Naive thymus-derived CD4-positive, alpha-beta T cell (primary cell): ENCODE measurements at regions of chr9 and their contacts with region 1.

Region 1: DNA sequence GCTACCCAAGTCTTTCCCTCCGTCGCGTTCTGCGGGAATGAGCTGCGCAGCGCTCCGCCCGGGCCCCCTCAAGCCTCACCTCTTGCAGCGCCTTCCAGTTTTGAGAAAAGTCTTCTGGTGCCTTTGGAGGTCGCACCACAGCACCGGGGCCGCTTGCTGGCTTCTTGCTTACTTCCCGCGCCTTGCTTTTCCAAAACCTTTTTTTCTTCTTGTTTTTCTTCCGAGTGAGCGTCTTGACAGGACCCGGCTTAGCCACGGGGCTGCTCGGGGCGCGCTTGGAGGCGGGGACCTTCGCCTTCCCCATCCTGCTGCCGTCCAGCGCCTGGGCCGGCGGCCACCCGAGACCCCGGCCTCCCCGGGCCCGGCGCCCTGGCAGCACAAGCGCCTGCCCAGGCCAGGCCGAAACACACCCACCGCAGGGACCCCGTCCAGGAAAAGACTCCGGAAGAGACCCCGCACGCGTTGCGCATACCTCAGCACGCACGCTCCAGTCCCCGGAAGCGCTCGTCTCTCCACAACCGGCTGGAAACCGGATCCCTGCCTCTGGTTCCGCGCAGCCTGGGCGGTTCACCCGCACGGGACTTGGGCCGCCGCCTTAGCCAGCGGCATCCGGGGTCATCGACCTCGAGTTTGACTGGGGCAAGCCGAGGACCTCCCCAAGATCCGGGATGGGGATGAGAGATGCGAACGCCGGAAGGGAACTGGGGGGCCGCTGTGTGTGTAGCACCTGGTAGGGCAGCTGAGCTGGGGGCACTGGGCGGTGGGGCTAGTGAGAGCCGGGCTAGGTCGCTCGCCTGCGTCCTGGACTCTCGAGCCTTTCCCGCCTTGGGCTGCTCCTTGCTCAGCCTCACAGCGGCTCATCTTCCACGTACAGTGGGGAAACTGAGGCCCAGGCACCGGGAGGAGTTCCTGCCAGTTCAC is at the start of gene REXO4:
- DNase-seq: peak; percentile 73 to 88 (median 84)
- ATAC-seq: peak; percentile 93
- H3K4me3 ChIP-seq: peak within 1 kb of the TSS; percentile 87
- H3K4me3 Mint-ChIP-seq: peak within 1 kb of the TSS; percentile 88 to 93 (median 91)
- H3K27ac ChIP-seq: peak within 1 kb of the TSS; percentile 80
- H3K27ac Mint-ChIP-seq: peak within 1 kb of the TSS; percentile 81 to 94 (median 91)
- H3K4me1 ChIP-seq: peaks cover 13 to 14% of the 10 kb centered on the region in 2 donors
- H3K4me1 Mint-ChIP-seq: peaks cover 32 to 60% (median 54%) of the 10 kb centered on the region in 7 donors
- H3K27me3 ChIP-seq: no peaks in the 10 kb centered on the region
- H3K27me3 Mint-ChIP-seq: peaks cover 0 to 3% (median 0%) of the 10 kb centered on the region in 5 donors
- total RNA-seq, gene REXO4: 17.8 to 44.1 (median 28.6) TPM

Region 2: DNA sequence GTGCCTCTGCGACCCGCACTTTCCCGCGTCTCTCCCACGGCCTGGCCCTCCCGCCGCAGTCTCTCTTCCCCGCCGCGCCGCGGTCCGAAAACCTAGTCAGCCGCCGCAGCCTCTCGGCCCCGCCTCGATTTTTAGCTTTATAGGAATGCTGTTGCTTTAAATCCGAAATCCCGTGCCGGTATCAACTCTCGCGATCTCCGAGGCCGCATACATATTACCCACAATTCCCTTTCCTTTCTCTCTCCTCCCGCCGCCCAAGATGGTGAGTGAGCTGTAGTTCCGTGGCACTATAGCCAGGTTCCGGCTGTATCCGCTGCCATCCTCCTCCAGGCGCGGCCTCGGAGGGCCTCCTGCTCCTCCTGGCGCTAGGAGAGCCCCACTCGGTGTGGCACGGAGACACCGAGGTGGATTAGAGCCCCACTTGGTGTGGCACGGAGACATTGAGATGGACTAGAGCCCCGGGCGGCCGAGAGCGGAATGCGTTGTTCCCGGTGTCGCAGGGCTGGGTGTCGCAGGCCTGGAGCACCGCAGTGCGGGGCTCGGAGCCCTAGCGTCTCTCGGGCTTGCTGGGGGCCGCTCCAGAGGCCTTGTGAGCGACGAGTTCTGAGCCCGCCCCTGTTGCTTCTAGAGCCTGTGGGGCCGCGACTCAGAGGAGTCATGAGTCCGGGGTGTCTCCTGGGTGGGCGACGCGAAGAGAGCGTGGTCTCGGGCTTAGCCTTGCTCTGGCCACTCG is 69.7 kb before region 1 on chr9 and contains the starts of genes MED22 and RPL7A:
- CTCF ChIA-PET with region 1: no interaction called
- POLR2A ChIA-PET with region 1: no interaction called
- intact Hi-C with region 1: loop called (anchors 1 to 5 kb)
- DNase-seq: peak; percentile 72 to 95 (median 92)
- ATAC-seq: peak; percentile 95
- H3K4me3 ChIP-seq: peak within 1 kb of the TSS; percentile 93
- H3K4me3 Mint-ChIP-seq: peak within 1 kb of the TSS; percentile 94 to 100 (median 98)
- H3K27ac ChIP-seq: peak within 1 kb of the TSS; percentile 98
- H3K27ac Mint-ChIP-seq: peak within 1 kb of the TSS; percentile 87 to 99 (median 97)
- H3K4me1 ChIP-seq: peaks cover 19 to 20% of the 10 kb centered on the region in 2 donors
- H3K4me1 Mint-ChIP-seq: peaks cover 23 to 46% (median 39%) of the 10 kb centered on the region in 7 donors
- H3K27me3 ChIP-seq: no peaks in the 10 kb centered on the region
- H3K27me3 Mint-ChIP-seq: peaks cover 0 to 2% (median 0%) of the 10 kb centered on the region in 5 donors
- total RNA-seq, gene MED22: 26.5 to 44.6 (median 32.8) TPM
- total RNA-seq, gene RPL7A: 2,002 to 2,815 (median 2,428) TPM

Region 3: GRCh38 chr9:133478851-133479711 is 61.3 kb after region 1 on chr9 and contains the start of gene SLC2A6:
- CTCF ChIA-PET with region 1: no interaction called
- POLR2A ChIA-PET with region 1: no interaction called
- intact Hi-C with region 1: loop called in 1 of 2 experiments (anchors 2 kb)
- DNase-seq: peak; percentile 64 to 87 (median 74)
- ATAC-seq: peak; percentile 96
- H3K4me3 ChIP-seq: peak within 1 kb of the TSS; percentile 77
- H3K4me3 Mint-ChIP-seq: peak within 1 kb of the TSS; percentile 50 to 83 (median 78)
- H3K27ac ChIP-seq: peak within 1 kb of the TSS; percentile 50
- H3K27ac Mint-ChIP-seq: peak within 1 kb of the TSS in 5 of 9 donors; percentile 48 to 83 (median 60)
- H3K4me1 ChIP-seq: peaks cover 0 to 12% of the 10 kb centered on the region in 2 donors
- H3K4me1 Mint-ChIP-seq: peaks cover 0 to 15% (median 10%) of the 10 kb centered on the region in 7 donors
- H3K27me3 ChIP-seq: no peaks in the 10 kb centered on the region
- H3K27me3 Mint-ChIP-seq: peaks cover 0 to 12% (median 0%) of the 10 kb centered on the region in 5 donors
- total RNA-seq, gene SLC2A6: 2.4 to 34.7 (median 3.6) TPM